Right ventricle myocardium superior (tissue), 1 donor: ENCODE measurements at regions of chr9 and their contacts with region 1.

Region 1: GRCh38 chr9:104927912-104928740 is at the start of gene ABCA1:
- DNase-seq: peak; percentile 95
- ATAC-seq: peak; percentile 85
- total RNA-seq, gene ABCA1: 12.1 TPM

Region 2: GRCh38 chr9:104968025-104968982 is 40.2 kb after region 1 on chr9:
- intact Hi-C with region 1: loop called (anchors 5 kb)
- DNase-seq: peak; percentile 95
- ATAC-seq: peak; percentile 97

Region 3: GRCh38 chr9:104991144-104991953 is 63.2 kb after region 1 on chr9:
- intact Hi-C with region 1: loop called (anchors 2 kb)
- DNase-seq: peak; percentile 95
- ATAC-seq: peak; percentile 91